ENCODE measurements at regions of chr10 and their contacts with region 1.

Region 1: DNA sequence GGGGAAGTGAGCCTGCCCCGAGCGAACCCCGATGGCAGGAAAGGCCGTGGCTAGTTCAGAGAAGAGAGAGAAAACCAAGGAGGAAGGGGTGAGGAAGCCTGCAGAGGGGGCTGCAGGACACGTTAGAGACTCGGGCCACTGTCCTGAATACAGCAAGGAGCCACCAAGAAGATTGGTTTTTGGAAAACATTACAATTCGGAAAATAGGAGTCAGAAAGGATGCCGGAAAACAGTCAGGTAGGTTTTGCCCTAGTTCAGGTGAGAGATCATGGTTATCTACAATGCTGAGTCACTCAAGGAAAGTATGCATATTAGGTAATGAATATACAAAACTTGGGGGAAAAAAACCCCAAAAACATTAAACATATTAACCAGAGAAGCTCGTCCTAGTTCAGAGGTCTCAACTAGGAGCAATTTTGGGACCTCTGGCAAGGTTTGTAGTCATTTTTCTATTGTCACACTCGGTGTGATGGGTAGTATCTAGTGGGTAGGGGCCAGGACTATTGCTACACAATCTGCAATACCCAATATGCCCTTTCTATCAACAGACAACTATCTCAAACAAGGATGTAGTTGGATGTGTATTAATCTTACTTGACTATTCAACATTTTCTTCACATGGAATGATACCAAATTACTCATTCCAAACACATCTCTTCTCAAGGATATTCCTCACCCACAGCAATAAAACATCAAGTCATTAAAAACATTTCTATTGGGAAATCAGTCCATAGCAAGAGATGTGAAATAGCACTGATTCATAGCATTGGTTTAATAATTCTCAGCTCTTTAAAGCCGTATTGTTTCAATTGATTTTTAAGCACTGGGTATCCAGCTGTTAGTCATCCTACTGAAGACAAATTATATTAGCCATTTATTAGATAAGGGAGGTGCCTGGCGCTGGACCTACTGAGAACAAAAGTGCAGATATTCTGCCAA is 74.4 kb upstream of the RSU1 start:
- DNase-seq: peak; percentile 53 to 71 (median 66)
- ATAC-seq: peak; percentile 58 to 95 (median 88)
- H3K4me3 ChIP-seq: no peak overlapping the region
- H3K27ac ChIP-seq: peak overlapping the region in 4 of 12 donors; percentile 9 to 40 (median 22)
- H3K4me1 ChIP-seq: peaks cover 0 to 11% (median 0%) of the 10 kb centered on the region in 12 donors
- H3K27me3 ChIP-seq: no peaks in the 10 kb centered on the region
- CTCF ChIP-seq: peak; percentile 35 to 78 (median 62)
- POLR2A ChIP-seq: no peak

Region 2: GRCh38 chr10:16929069-16929468 is 37.4 kb after region 1 on chr10:
- intact Hi-C with region 1: no loop called
- DNase-seq: no peak
- ATAC-seq: no peak
- H3K4me3 ChIP-seq: no peak overlapping the region
- H3K27ac ChIP-seq: no peak overlapping the region
- H3K4me1 ChIP-seq: peaks cover 0 to 3% (median 0%) of the 10 kb centered on the region in 12 donors
- H3K27me3 ChIP-seq: no peaks in the 10 kb centered on the region
- CTCF ChIP-seq: no peak
- POLR2A ChIP-seq: no peak

Region 3: GRCh38 chr10:16995867-16996529 is 104.4 kb after region 1 on chr10:
- intact Hi-C with region 1: loop called in 2 of 10 experiments (anchors 1 to 10 kb)
- DNase-seq: peak in 1 of 5 donors; percentile 26
- ATAC-seq: peak; percentile 43 to 87 (median 68)
- H3K4me3 ChIP-seq: no peak overlapping the region
- H3K27ac ChIP-seq: peak overlapping the region in 10 of 12 donors; percentile 17 to 80 (median 60)
- H3K4me1 ChIP-seq: peaks cover 0 to 47% (median 19%) of the 10 kb centered on the region in 12 donors
- H3K27me3 ChIP-seq: no peaks in the 10 kb centered on the region
- CTCF ChIP-seq: no peak
- POLR2A ChIP-seq: no peak

Region 4: DNA sequence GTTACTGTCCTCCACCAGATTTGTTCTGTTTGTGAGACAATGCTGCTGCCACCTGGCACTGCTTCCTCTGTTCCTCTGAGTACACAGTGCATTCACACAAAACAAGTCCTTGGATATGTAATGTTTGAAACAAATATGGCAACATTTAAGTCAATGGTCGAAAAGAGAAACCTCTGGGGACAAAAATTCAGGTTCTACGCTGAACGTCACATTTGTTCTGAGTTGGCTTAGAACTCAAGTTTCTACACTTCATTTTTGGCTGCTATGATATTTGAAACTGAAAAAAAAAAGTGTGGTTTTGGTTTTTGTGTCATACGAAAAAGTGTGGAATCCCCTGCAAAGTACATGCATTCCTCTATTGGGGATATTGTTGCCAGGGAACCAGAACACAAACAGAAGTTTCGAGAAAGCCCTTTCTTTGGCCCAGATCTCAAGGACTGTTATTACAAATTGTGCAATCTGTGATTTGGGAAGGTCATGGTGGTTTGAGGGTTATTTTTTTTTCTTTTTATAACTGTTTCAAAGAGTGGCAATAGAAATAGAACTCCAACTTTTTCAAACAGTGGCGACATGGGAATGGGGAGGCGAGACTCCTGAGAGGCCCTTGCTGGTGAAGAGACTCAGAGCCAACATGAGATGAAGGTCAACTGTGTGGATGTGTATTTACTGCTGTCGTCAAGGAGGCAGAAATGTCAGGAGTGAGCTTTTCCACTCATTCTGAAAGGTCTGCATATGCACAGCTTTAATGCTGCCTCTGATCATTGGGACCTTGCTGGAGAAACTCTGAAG is 110.5 kb after region 1 on chr10:
- intact Hi-C with region 1: loop called in 1 of 10 experiments (anchors 10 kb)
- DNase-seq: peak in 4 of 5 donors; percentile 44 to 47 (median 46)
- ATAC-seq: peak; percentile 73 to 81 (median 77)
- H3K4me3 ChIP-seq: no peak overlapping the region
- H3K27ac ChIP-seq: peak overlapping the region; percentile 33 to 91 (median 66)
- H3K4me1 ChIP-seq: peaks cover 0 to 59% (median 14%) of the 10 kb centered on the region in 12 donors
- H3K27me3 ChIP-seq: no peaks in the 10 kb centered on the region
- CTCF ChIP-seq: no peak
- POLR2A ChIP-seq: no peak